ENCODE measurements at regions of chr10 and their contacts with region 1.

Region 1: GRCh38 chr10:95635319-95635733 is 21.2 kb downstream of the ALDH18A1 start:
- DNase-seq: peak; percentile 63 to 72
- H3K4me3 ChIP-seq: no peak overlapping the region
- H3K4me3 Mint-ChIP-seq: peak overlapping the region; percentile 40
- H3K27ac Mint-ChIP-seq: peak overlapping the region; percentile 63
- H3K4me1 ChIP-seq: peaks cover 37% of the 10 kb centered on the region
- H3K4me1 Mint-ChIP-seq: peaks cover 36% of the 10 kb centered on the region
- H3K27me3 ChIP-seq: no peaks in the 10 kb centered on the region
- H3K27me3 Mint-ChIP-seq: no peaks in the 10 kb centered on the region
- CTCF ChIP-seq: no peak

Region 2: DNA sequence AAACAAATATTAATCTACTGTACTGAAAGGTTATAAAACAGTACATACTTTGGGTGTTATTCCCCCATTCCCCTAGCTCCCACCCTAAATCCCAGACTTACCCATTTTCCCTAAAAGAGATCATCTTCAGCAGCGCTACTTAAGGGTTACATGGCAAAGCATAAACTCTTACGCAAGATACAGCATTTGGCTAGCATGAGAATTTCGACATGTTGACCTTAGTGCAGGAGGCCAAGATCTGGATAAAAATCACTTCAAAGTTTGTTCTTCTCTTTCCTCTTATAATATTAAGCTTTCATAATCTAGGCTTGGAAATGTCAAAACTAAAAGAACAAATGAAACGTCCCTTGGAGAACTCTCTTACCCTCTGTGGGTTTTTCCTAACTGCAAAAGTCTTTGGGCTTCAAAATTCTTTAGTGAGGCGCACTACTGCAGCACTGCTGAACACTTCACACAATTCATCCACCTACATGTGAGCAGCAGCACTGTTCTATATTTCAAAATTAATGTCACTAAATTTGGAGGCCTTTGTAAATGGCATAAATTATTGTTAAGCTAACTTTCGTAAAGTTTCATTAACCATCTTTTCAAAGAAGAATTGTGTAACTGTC is 285.0 kb before region 1 on chr10:
- CTCF ChIA-PET with region 1: no interaction called
- POLR2A ChIA-PET with region 1: no interaction called
- intact Hi-C with region 1: no loop called
- DNase-seq: peak in 1 of 2 experiments; percentile 30
- H3K4me3 ChIP-seq: no peak overlapping the region
- H3K4me3 Mint-ChIP-seq: peak overlapping the region; percentile 37
- H3K27ac Mint-ChIP-seq: peak overlapping the region; percentile 81
- H3K4me1 ChIP-seq: peaks cover 57% of the 10 kb centered on the region
- H3K4me1 Mint-ChIP-seq: peaks cover 45% of the 10 kb centered on the region
- H3K27me3 ChIP-seq: no peaks in the 10 kb centered on the region
- H3K27me3 Mint-ChIP-seq: no peaks in the 10 kb centered on the region
- CTCF ChIP-seq: no peak

Region 3: DNA sequence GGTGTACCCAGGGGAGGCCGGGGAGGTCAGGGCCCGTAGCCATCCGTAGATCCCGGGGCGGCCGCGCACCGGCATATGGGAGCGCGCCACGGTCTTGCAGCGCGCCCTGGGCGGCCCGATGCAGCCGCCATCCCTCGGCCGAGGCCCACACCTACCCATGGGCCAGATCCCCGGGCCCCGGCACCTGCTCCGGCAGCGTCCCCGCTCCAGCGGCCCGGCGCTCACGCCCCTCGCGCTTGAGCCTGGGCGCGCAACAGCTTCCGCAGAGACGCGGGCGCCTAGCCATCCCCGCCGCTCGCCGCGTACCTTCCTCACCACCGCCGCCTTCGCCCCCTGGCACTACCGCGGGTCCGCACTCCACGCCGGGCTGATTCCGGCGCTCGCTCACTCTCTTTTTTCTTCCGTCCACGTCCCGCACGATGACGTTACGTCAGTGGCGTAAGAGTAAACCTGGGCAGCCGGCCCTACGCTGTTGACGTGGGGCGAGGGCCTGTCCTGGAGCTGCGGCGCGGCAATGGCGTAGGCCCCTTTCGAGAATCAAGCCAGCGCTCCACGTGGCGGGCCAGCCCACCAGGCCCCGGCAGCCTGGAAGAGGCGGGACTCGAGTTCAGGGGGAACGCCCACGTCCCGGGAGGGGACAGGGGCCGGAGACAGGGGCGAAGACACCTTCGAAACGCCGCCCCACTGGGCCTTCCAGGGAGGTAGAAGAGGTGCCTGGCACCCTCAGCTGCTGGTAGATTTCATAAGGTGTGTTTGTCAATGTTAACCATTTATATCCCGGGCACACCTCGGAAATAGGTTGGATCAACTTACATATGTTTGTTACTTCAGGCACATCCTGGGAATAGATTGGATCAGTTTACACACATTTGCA is 21.2 kb after region 1 on chr10 and contains the start of gene ALDH18A1:
- CTCF ChIA-PET with region 1: no interaction called
- POLR2A ChIA-PET with region 1: interaction called, 5 read pairs
- intact Hi-C with region 1: loop called (anchors 1 kb)
- DNase-seq: peak; percentile 95 to 96
- H3K4me3 ChIP-seq: peak within 1 kb of the TSS; percentile 99
- H3K4me3 Mint-ChIP-seq: peak within 1 kb of the TSS; percentile 99
- H3K27ac Mint-ChIP-seq: peak within 1 kb of the TSS; percentile 98
- H3K4me1 ChIP-seq: peaks cover 6% of the 10 kb centered on the region
- H3K4me1 Mint-ChIP-seq: peaks cover 13% of the 10 kb centered on the region
- H3K27me3 ChIP-seq: no peaks in the 10 kb centered on the region
- H3K27me3 Mint-ChIP-seq: no peaks in the 10 kb centered on the region
- CTCF ChIP-seq: no peak
- total RNA-seq, gene ALDH18A1: 166 and 169 TPM in 2 replicates

Region 4: DNA sequence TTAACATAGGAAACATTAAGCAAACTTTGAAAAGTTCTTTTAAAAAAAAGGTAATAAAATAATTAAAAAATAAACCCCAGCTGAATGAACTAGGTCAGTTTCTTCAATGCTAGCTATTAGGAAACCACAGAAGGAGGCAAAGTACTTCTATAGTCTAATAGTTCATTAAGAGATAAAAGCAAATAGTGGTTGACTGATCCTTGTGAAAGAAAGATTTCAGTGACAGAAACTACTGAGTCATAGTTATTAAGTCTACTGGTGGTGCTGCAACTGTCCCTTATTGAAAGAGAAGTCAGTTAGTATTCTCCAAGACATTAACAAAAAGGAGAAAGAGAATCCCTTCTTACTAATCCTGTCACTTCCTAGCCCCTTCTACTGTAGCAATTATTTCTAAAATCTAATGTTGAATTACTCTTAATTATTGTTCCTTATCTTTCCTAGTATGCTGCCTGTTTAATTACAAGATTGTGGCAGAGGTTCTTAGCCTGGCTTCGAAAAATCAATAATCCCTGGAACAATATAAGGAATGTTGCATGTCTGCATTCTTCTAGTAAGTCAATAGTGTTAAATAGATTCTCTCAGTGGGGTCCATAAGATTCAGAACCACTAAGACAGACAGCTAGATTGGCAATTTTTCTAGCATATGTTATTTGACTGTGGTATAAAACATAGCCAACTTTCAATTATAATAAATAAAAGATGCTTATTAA is 40.2 kb after region 1 on chr10:
- CTCF ChIA-PET with region 1: no interaction called
- POLR2A ChIA-PET with region 1: no interaction called
- intact Hi-C with region 1: loop called (anchors 1 kb)
- DNase-seq: peak in 1 of 2 experiments; percentile 67
- H3K4me3 ChIP-seq: no peak overlapping the region
- H3K4me3 Mint-ChIP-seq: peak overlapping the region; percentile 53
- H3K27ac Mint-ChIP-seq: peak overlapping the region; percentile 90
- H3K4me1 ChIP-seq: peaks cover 27% of the 10 kb centered on the region
- H3K4me1 Mint-ChIP-seq: peaks cover 5% of the 10 kb centered on the region
- H3K27me3 ChIP-seq: no peaks in the 10 kb centered on the region
- H3K27me3 Mint-ChIP-seq: no peaks in the 10 kb centered on the region
- CTCF ChIP-seq: no peak

Measured in Caco-2 (cell line).